Activated CD4-positive, alpha-beta T cell treated with anti-CD3 and anti-CD28 coated beads, Interleukin-2, amount 10 ng/mL, durations not matched to agents 24 days and 14 days (primary cell): ENCODE measurements at regions of chr21 and their contacts with region 1.

Region 1: GRCh38 chr21:26473471-26473870 is 99.6 kb downstream of the CYYR1 start:
- DNase-seq: peak; percentile 56
- H3K4me3 Mint-ChIP-seq: no peak overlapping the region
- H3K27ac Mint-ChIP-seq: peak overlapping the region; percentile 31
- H3K4me1 Mint-ChIP-seq: peaks cover 17% of the 10 kb centered on the region
- H3K27me3 Mint-ChIP-seq: no peaks in the 10 kb centered on the region

Region 2: DNA sequence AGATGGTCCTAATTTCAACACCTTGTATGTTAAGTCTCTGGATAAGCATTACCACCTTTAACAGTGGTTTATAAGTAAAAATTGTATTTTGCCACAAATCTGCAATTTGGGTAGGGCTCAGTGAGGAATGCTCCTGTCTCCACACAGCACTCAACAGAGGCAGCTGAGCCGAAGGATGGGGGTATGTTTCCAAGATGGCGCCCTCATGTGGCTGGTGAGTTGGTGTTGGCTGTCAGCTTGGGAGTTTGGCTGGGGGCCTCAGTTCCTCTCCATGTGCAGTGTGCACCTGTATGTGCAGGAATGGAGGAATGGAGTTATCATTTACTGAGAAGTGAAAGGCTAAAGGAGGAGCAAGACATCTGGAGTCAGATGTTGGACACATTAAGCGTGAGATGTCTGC is 601.9 kb before region 1 on chr21:
- intact Hi-C with region 1: no loop called
- DNase-seq: no peak
- H3K4me3 Mint-ChIP-seq: no peak overlapping the region
- H3K27ac Mint-ChIP-seq: no peak overlapping the region
- H3K4me1 Mint-ChIP-seq: no peaks in the 10 kb centered on the region
- H3K27me3 Mint-ChIP-seq: peaks cover 2% of the 10 kb centered on the region

Region 3: DNA sequence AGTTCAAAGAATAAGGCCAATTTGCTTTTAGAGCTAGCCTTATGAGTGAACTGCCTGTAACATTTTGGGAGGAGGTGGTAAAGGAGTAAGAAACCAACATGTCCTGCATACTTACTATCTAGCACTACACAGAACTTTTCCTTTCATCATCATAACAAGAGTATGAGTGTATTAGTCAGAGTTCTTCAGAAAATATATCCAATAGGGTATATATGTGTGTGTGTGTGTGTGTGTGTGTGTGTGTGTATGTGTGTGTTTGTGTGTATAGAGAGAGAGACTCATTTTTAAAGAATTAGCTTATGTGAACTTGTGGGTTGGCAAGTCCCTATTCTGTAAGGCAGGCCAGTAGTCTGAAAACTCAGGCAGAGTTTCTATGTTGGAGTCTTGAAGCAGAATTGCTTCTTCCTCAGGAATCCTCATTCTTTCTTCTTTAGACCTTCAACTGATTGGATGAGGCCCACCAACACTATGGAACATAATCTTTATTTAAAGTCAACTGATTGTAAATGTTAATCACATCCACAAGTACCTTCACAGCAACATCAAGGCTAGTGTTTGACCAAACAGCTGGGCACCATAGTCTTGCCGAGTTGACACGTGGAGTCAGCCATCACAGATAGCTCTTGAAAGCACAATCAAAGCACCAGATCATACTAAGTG is 22.3 kb before region 1 on chr21:
- intact Hi-C with region 1: loop called (anchors 1 kb)
- DNase-seq: no peak
- H3K4me3 Mint-ChIP-seq: no peak overlapping the region
- H3K27ac Mint-ChIP-seq: no peak overlapping the region
- H3K4me1 Mint-ChIP-seq: no peaks in the 10 kb centered on the region
- H3K27me3 Mint-ChIP-seq: no peaks in the 10 kb centered on the region